ENCODE measurements at regions of chr20 and their contacts with region 1.

Region 1: DNA sequence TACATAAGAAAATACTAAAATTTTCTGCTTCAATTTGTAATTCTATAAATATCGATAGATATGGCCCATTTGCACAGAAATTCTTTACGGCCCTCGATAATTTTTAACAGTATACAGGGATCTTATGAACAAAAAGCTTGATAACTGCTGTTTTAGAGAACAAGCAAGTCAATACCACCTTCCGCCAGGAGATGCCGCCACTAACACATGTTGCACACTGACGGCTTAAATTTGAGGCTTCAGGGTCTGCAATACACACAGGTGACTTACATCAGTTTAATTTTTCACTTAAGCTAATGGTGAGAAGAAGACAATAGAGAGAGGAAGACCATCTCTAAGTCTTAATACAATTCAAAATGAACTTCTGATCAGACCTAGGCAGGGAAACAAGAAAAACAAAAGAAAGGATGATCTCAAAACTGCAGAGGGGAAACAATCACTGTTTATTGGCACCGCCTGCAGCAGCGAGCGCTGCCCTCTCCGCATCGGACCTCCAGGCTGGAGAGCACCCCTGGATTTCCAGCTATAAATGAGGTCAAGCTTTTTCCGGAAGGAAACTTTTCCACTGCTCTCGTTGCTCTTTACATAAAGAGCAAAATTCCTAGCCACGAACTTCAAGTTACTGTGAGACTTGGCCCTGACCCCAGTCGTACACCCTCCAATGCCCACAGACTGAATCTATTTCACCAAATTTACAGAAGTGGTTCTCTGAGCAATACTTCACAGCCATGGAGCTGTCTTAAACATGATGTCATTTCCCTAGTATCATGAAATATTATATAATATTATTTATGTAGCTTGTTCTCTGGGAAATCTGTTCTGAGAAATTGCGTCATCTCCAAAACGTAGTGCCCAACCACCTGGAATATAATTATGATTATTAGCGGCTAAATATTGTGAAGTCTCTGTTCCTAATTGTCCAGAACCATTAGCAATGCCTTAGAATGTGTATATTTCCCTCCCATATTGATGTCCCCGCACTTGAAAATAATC is 54.1 kb downstream of the OTOR start:
- DNase-seq: peak; percentile 9
- H3K4me3 ChIP-seq: no peak overlapping the region
- H3K27ac ChIP-seq: no peak overlapping the region
- H3K4me1 ChIP-seq: no peaks in the 10 kb centered on the region
- H3K27me3 ChIP-seq: peaks cover 2% of the 10 kb centered on the region
- CTCF ChIP-seq: peak; percentile 88 to 96

Region 2: DNA sequence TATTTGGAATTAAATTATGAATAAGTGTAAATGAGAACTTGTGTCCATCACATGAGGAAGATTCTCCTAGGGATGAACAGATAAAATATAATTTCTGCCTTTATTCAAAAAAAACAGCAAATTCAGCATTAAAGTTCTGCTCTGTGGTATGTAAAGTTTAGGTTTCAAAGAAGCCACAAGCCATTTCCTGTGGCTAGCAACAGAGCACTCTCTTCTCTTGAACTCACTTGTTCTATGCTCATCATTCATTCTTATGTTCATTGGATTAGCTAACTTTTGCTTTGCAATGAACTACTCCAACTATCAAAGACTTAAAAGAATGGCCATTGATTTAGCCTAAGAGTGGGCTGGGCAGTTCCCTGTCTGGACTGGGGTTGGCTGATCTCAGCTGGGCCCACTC is 93.2 kb before region 1 on chr20:
- CTCF ChIA-PET with region 1: no interaction called
- dilution Hi-C with region 1: no loop called
- in situ Hi-C with region 1: no loop called
- intact Hi-C with region 1: no loop called
- DNase-seq: no peak
- H3K4me3 ChIP-seq: no peak overlapping the region
- H3K27ac ChIP-seq: no peak overlapping the region
- H3K4me1 ChIP-seq: no peaks in the 10 kb centered on the region
- H3K27me3 ChIP-seq: peaks cover 2% of the 10 kb centered on the region
- CTCF ChIP-seq: no peak

Region 3: DNA sequence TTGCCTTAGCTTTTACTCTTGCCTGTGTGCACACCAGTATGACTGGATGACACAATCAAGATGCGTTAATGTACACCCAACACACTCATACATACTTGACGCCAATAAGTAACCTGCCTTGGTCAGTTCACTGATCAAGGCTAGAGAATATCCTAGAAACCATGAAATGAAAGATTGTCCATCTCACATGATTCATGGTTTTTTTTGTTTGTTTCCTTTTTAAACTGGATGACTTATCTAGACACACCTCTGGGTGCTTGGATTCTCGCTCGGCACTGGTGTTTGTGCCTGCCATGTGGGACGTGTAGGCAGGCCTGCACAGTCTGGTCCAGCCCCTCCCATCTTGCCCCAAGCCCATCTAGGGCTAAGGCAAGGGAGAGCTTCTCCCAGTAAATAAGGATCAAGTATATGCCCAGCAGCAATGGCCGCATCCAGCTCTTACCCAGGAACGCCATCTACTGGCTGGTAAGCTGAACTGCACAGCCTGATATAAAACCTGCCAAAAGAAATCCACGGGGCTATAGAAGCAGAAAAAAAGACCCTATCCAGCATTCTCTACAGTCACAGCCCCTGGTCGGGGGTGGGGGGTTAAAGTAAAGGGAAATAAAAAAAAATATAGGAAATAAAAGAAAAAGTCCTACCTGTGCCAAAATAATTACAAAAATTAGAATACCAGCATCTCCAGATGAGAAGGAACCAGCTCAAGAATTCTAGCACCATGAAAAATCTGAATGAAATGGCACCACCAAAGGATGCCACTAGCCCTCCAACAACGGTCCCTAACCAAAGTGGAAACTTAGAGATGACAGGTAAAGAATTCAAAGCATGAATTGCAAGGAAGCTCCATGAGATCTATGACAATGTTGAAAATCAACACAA is 19.2 kb after region 1 on chr20:
- CTCF ChIA-PET with region 1: interaction called, 3 read pairs
- dilution Hi-C with region 1: no loop called
- in situ Hi-C with region 1: no loop called
- intact Hi-C with region 1: loop called (anchors 1 kb)
- DNase-seq: peak; percentile 28
- H3K4me3 ChIP-seq: no peak overlapping the region
- H3K27ac ChIP-seq: no peak overlapping the region
- H3K4me1 ChIP-seq: no peaks in the 10 kb centered on the region
- H3K27me3 ChIP-seq: no peaks in the 10 kb centered on the region
- CTCF ChIP-seq: peak; percentile 88 to 93

Region 4: GRCh38 chr20:17281478-17281877 is 479.3 kb after region 1 on chr20:
- CTCF ChIA-PET with region 1: no interaction called
- dilution Hi-C with region 1: no loop called
- in situ Hi-C with region 1: no loop called
- intact Hi-C with region 1: loop called (anchors 1 kb)
- DNase-seq: peak; percentile 18
- H3K4me3 ChIP-seq: no peak overlapping the region
- H3K27ac ChIP-seq: no peak overlapping the region
- H3K4me1 ChIP-seq: no peaks in the 10 kb centered on the region
- H3K27me3 ChIP-seq: no peaks in the 10 kb centered on the region
- CTCF ChIP-seq: peak; percentile 43 to 45

Region 5: GRCh38 chr20:17431621-17432364 is 629.6 kb after region 1 on chr20:
- CTCF ChIA-PET with region 1: interaction called, 5 read pairs
- dilution Hi-C with region 1: loop called (anchors 10 kb)
- in situ Hi-C with region 1: loop called (anchors 5 to 10 kb)
- intact Hi-C with region 1: loop called (anchors 1 kb)
- DNase-seq: peak; percentile 23
- H3K4me3 ChIP-seq: no peak overlapping the region
- H3K27ac ChIP-seq: no peak overlapping the region
- H3K4me1 ChIP-seq: peaks cover 4% of the 10 kb centered on the region
- H3K27me3 ChIP-seq: no peaks in the 10 kb centered on the region
- CTCF ChIP-seq: peak; percentile 79 to 87

Region 6: GRCh38 chr20:17617551-17618223 is 815.5 kb after region 1 on chr20:
- CTCF ChIA-PET with region 1: no interaction called
- dilution Hi-C with region 1: no loop called
- in situ Hi-C with region 1: loop called in 1 of 2 experiments (anchors 25 kb)
- intact Hi-C with region 1: loop called (anchors 10 kb)
- DNase-seq: no peak
- H3K4me3 ChIP-seq: no peak overlapping the region
- H3K27ac ChIP-seq: no peak overlapping the region
- H3K4me1 ChIP-seq: peaks cover under 1% of the 10 kb centered on the region
- H3K27me3 ChIP-seq: no peaks in the 10 kb centered on the region
- CTCF ChIP-seq: peak; percentile 42 to 67

Measured in mammary epithelial cell (primary cell).